CD14-positive monocyte (primary cell): ENCODE measurements at regions of chr1 and their contacts with region 1.

Region 1: GRCh38 chr1:174999216-174999925 is 376 bp upstream of the CACYBP start:
- DNase-seq: peak; percentile 99
- H3K4me3 ChIP-seq: peak overlapping the region; percentile 52 to 81 (median 75)
- H3K4me3 Mint-ChIP-seq: no peak overlapping the region
- H3K27ac ChIP-seq: peak overlapping the region; percentile 95 to 100
- H3K27ac Mint-ChIP-seq: no peak overlapping the region
- H3K4me1 ChIP-seq: peaks cover 27 to 39% of the 10 kb centered on the region in 2 donors
- H3K4me1 Mint-ChIP-seq: peaks cover 38% of the 10 kb centered on the region
- H3K27me3 ChIP-seq: no peaks in the 10 kb centered on the region
- H3K27me3 Mint-ChIP-seq: no peaks in the 10 kb centered on the region
- CTCF ChIP-seq: no peak

Region 2: DNA sequence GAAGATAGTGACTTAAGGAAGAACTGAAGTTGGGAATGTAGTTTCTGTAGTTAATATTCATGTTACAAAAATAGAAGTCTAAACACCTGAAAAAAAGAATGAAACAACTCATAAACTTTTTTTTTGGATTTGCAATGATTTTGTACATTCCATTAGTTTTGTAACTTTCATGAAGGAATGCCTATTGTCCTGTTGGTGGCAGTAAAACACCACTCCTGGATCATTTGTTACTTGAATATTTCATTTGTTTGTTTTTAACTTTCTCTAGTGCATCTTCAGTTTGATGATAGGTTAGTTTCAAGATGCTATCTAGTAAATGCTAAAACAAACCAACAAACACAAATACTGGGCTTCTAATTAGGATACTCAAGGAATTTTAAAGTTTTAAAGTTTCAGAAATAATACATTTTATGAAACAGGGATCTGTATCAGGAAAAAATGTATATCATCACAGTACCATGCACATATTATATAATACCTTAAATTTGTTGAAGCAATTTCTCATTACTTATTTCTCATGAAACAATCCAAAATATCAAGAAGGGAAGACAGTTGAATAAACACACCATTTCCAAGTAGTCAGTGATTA is 229.3 kb before region 1 on chr1:
- intact Hi-C with region 1: loop called (anchors 5 kb)
- DNase-seq: peak; percentile 37 to 64 (median 46)
- H3K4me3 ChIP-seq: no peak overlapping the region
- H3K4me3 Mint-ChIP-seq: no peak overlapping the region
- H3K27ac ChIP-seq: no peak overlapping the region
- H3K27ac Mint-ChIP-seq: no peak overlapping the region
- H3K4me1 ChIP-seq: no peaks in the 10 kb centered on the region
- H3K4me1 Mint-ChIP-seq: peaks cover 2% of the 10 kb centered on the region
- H3K27me3 ChIP-seq: no peaks in the 10 kb centered on the region
- H3K27me3 Mint-ChIP-seq: no peaks in the 10 kb centered on the region
- CTCF ChIP-seq: peak; percentile 84

Region 3: GRCh38 chr1:175023043-175023921 is 23.9 kb after region 1 on chr1 and contains the start of gene MRPS14:
- intact Hi-C with region 1: loop called in 1 of 2 experiments (anchors 2 kb)
- DNase-seq: peak; percentile 97 to 98 (median 97)
- H3K4me3 ChIP-seq: peak within 1 kb of the TSS; percentile 82 to 92 (median 89)
- H3K4me3 Mint-ChIP-seq: peak within 1 kb of the TSS; percentile 88 to 97
- H3K27ac ChIP-seq: peak within 1 kb of the TSS; percentile 73 to 92
- H3K27ac Mint-ChIP-seq: peak within 1 kb of the TSS; percentile 90 to 97 (median 96)
- H3K4me1 ChIP-seq: peaks cover 16 to 17% of the 10 kb centered on the region in 2 donors
- H3K4me1 Mint-ChIP-seq: peaks cover 22% of the 10 kb centered on the region
- H3K27me3 ChIP-seq: no peaks in the 10 kb centered on the region
- H3K27me3 Mint-ChIP-seq: peaks cover 0 to 1% (median 0%) of the 10 kb centered on the region in 3 donors
- CTCF ChIP-seq: no peak
- polyA plus RNA-seq, gene MRPS14: 5.4 to 53.2 (median 48.1) TPM

Region 4: GRCh38 chr1:175043824-175044223 is 44.5 kb after region 1 on chr1:
- intact Hi-C with region 1: no loop called
- DNase-seq: no peak
- H3K4me3 ChIP-seq: no peak overlapping the region
- H3K4me3 Mint-ChIP-seq: no peak overlapping the region
- H3K27ac ChIP-seq: no peak overlapping the region
- H3K27ac Mint-ChIP-seq: no peak overlapping the region
- H3K4me1 ChIP-seq: no peaks in the 10 kb centered on the region
- H3K4me1 Mint-ChIP-seq: no peaks in the 10 kb centered on the region
- H3K27me3 ChIP-seq: no peaks in the 10 kb centered on the region
- H3K27me3 Mint-ChIP-seq: peaks cover 0 to 3% (median 0%) of the 10 kb centered on the region in 3 donors
- CTCF ChIP-seq: no peak